HepG2 (cell line): ENCODE measurements at regions of chr22 and their contacts with region 1.

Region 1: GRCh38 chr22:39532215-39533071 is at the start of gene RPS19BP1:
- DNase-seq: peak; percentile 99
- ATAC-seq: peak; percentile 60
- H3K4me3 ChIP-seq: peak within 1 kb of the TSS; percentile 80 to 97 (median 96)
- H3K27ac ChIP-seq: peak within 1 kb of the TSS; percentile 76
- H3K4me1 ChIP-seq: peaks cover 68% of the 10 kb centered on the region
- H3K27me3 ChIP-seq: peaks cover 0 to 14% of the 10 kb centered on the region in 2 experiments; a peak in 3 of 5 replicates
- CTCF ChIP-seq: peak; percentile 3; the same call in 1 of the 2 replicates
- EP300 ChIP-seq: peak in 1 of 2 experiments; percentile 49; a peak in 1 of 4 replicates
- POLR2A ChIP-seq: peak; percentile 85 to 91
- RAD21 ChIP-seq: no peak; the same call in 1 of the 2 replicates
- total RNA-seq, gene RPS19BP1: 81.3 and 88.2 TPM in 2 replicates

Region 2: GRCh38 chr22:39496131-39496838 is 36.2 kb before region 1 on chr22:
- CTCF ChIA-PET with region 1: interaction called, 24 read pairs
- POLR2A ChIA-PET with region 1: interaction called, 167 read pairs
- in situ Hi-C with region 1: no loop called
- intact Hi-C with region 1: loop called (anchors 1 kb)
- DNase-seq: peak; percentile 74
- ATAC-seq: peak; percentile 88
- H3K4me3 ChIP-seq: peak overlapping the region in 1 of 3 experiments; percentile 57; a peak in 2 of 6 replicates
- H3K27ac ChIP-seq: no peak overlapping the region
- H3K4me1 ChIP-seq: peaks cover 51% of the 10 kb centered on the region
- H3K27me3 ChIP-seq: peaks cover 0 to 2% of the 10 kb centered on the region in 2 experiments; a peak in 1 of 5 replicates
- CTCF ChIP-seq: peak; percentile 84
- EP300 ChIP-seq: no peak
- POLR2A ChIP-seq: no peak
- RAD21 ChIP-seq: 0 out of 2 replicates have a peak, but pooled peaks have one; percentile 18

Region 3: DNA sequence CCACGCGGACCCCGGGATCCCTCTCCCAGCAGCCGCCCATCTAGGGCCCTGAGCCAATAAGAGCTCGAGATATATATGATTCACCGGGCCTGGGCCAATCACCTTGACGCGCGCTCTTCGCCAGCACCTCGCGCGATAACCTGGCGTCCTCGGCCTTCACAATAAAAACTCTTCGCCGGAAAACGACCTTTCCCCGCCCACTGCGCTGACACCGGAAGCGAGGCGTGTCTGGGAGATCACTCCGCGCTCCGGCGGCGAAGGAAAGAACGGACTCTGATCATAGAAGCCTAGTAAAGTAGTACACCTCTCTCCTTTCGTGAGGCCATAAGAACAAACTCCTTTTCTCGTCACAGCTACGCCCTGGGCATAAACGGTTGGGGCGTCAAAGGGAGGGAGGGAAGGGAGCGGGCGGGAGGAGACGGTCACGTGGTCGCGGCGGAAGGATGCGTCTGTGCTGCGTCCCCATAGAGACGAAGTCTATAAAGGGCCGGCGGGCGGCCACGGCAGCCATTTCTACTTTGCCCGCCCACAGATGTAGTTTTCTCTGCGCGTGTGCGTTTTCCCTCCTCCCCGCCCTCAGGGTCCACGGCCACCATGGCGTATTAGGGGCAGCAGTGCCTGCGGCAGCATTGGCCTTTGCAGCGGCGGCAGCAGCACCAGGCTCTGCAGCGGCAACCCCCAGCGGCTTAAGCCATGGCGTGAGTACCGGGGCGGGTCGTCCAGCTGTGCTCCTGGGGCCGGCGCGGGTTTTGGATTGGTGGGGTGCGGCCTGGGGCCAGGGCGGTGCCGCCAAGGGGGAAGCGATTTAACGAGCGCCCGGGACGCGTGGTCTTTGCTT is 12.2 kb before region 1 on chr22 and contains the start of gene ATF4:
- CTCF ChIA-PET with region 1: no interaction called
- POLR2A ChIA-PET with region 1: interaction called, 75 read pairs
- in situ Hi-C with region 1: no loop called
- intact Hi-C with region 1: no loop called
- DNase-seq: peak; percentile 98
- ATAC-seq: peak; percentile 87
- H3K4me3 ChIP-seq: peak within 1 kb of the TSS; percentile 98 to 100 (median 100)
- H3K27ac ChIP-seq: peak within 1 kb of the TSS; percentile 100
- H3K4me1 ChIP-seq: peaks cover 50% of the 10 kb centered on the region
- H3K27me3 ChIP-seq: no peaks in the 10 kb centered on the region; a peak in 1 of 5 replicates
- CTCF ChIP-seq: no peak
- EP300 ChIP-seq: no peak
- POLR2A ChIP-seq: peak; percentile 97 to 98
- RAD21 ChIP-seq: no peak
- total RNA-seq, gene ATF4: 442 and 486 TPM in 2 replicates

Region 4: DNA sequence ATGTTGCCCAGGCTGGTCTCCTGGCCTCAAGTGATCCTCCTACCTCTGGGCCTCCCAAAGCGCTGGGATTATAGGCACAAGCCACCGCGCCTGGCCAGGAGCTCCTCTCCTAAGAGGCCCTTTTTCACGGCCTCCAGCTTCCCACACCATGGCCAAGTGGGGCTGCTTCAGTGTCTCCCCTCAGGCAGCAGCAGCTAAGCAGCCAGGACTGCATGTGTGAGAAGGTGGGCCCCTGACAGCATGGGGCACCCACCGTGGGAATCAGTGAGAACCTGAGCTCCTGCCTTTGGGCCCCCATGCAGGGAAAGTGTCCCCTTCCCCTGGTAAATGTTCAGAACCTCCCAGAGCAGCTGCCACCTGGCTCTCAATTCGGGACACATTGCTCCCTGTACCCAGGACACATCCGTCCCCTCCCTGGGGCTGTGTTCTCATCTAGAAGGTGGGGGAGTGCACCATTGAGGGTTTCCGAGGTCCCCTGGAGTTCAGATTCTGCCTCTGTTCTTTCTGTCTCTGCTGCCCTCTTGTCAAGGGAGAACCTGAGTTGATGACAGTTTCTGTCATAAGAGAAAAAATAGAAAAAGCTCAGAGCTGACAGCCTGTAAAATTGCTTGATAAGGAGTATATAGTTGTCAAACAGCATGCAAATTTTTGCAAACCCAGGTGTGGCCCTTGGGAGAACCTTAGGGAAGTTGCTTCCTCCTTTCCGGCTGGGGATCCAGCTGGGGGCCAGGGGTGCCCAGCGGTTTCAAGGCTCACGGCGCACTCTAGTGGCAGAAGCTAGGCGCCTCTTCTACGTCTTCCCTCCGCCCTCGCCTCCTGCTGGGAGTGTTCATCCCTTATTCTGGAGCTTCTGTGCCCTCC is 492.0 kb after region 1 on chr22:
- CTCF ChIA-PET with region 1: interaction called, 21 read pairs
- POLR2A ChIA-PET with region 1: interaction called, 5 read pairs
- in situ Hi-C with region 1: loop called (anchors 5 kb)
- intact Hi-C with region 1: no loop called
- DNase-seq: peak; percentile 54
- ATAC-seq: peak; percentile 72
- H3K4me3 ChIP-seq: no peak overlapping the region
- H3K27ac ChIP-seq: no peak overlapping the region
- H3K4me1 ChIP-seq: peaks cover 15% of the 10 kb centered on the region
- H3K27me3 ChIP-seq: peaks cover 4 to 66% of the 10 kb centered on the region in 2 experiments; a peak in 4 of 5 replicates
- CTCF ChIP-seq: peak; percentile 94
- EP300 ChIP-seq: no peak
- POLR2A ChIP-seq: no peak
- RAD21 ChIP-seq: peak; percentile 88

Region 5: DNA sequence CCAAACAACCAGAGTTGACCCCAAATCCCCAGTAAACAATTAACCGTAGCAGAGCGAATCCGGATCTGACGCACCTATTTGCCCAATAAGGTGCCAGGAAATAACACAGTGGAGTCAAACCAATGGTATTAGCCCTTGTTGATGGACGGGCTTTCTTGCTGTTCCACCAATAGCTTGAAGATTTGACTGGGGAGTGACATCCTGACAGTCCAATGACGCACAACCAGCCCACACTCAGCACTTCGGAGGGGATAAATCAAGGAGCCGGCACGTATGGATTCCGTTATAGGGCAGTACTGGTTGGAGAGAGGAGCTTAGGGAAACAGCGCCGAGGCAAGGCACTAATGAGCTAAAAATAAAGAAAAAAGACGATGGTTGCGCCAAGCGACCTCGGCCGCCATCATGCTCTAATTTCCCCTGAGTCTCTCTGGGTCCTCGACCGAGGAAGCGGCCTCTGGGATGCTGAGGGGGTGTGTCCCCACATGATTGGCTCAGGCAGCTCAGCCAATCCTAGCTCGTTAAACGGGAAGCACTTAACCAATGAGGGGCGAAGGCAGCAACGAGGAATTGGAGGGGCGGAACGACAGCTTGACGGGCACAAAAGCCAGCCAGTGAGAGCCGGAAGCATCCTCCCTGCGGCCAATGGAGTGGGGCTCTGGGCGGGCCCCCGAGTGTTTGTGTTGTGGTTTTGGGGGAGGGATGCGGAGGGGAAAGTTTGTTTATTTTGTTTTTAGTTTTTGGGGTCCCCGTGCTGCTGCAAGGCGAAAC is 511.8 kb after region 1 on chr22:
- CTCF ChIA-PET with region 1: no interaction called
- POLR2A ChIA-PET with region 1: interaction called, 11 read pairs
- in situ Hi-C with region 1: no loop called
- intact Hi-C with region 1: no loop called
- DNase-seq: peak; percentile 98
- ATAC-seq: peak; percentile 95
- H3K4me3 ChIP-seq: peak overlapping the region; percentile 72 to 95 (median 73)
- H3K27ac ChIP-seq: peak overlapping the region; percentile 77
- H3K4me1 ChIP-seq: peaks cover 16% of the 10 kb centered on the region
- H3K27me3 ChIP-seq: peaks cover 0 to 3% of the 10 kb centered on the region in 2 experiments; a peak in 1 of 5 replicates
- CTCF ChIP-seq: no peak
- EP300 ChIP-seq: no peak
- POLR2A ChIP-seq: peak; percentile 59 to 86
- RAD21 ChIP-seq: no peak